ENCODE measurements at regions of chr11 and their contacts with region 1.

Region 1: GRCh38 chr11:33329705-33330329 is 72.6 kb downstream of the HIPK3 start:
- DNase-seq: peak in 1 of 3 donors; percentile 62
- ATAC-seq: peak; percentile 87
- H3K4me3 ChIP-seq: no peak overlapping the region
- H3K4me1 ChIP-seq: peaks cover 1% of the 10 kb centered on the region
- CTCF ChIP-seq: peak; percentile 15

Region 2: GRCh38 chr11:33168709-33169200 is 161.1 kb before region 1 on chr11:
- intact Hi-C with region 1: loop called (anchors 5 kb)
- DNase-seq: no peak
- ATAC-seq: no peak
- H3K4me3 ChIP-seq: no peak overlapping the region
- H3K4me1 ChIP-seq: no peaks in the 10 kb centered on the region
- CTCF ChIP-seq: no peak

Region 3: DNA sequence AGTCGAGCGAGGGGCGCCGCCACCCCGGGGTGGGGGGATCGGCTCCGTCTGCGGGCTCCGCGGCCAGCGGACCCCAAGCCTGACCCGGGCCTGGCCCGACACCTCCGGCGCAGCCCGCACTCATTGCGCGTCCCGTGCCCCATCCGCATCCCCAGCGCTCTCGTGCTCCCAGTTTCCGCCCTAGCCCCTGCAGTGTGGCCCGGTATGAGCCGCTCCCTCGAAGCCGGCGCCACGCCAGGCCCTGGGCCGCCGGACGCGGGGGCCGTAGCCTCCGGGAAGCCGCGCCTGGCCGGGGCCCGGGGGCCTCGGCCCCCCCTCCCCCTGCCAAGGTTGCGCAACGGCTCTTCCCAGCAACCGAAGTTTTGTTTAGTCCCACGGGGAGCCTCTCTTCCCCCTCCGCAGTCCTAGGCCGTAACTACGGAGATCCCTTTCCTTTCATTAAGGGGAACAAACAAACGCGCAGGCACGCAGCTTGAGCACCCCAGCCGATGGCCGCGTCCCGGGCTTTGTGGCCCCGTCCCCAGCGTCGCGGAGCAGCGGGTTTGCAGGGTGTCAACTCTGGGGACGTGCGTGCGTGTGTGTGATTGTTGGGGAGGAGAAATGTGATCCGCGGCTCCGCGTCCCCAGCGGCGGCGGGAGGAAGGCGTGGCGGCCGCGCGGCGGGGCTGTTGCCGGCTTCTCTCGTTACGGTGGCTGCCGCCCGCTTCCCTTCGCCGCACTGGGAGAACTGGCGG is 71.8 kb before region 1 on chr11:
- intact Hi-C with region 1: loop called (anchors 10 kb)
- DNase-seq: peak; percentile 79 to 87 (median 87)
- ATAC-seq: peak; percentile 75
- H3K4me3 ChIP-seq: peak overlapping the region; percentile 95
- H3K4me1 ChIP-seq: peaks cover 16% of the 10 kb centered on the region
- CTCF ChIP-seq: no peak

Region 4: DNA sequence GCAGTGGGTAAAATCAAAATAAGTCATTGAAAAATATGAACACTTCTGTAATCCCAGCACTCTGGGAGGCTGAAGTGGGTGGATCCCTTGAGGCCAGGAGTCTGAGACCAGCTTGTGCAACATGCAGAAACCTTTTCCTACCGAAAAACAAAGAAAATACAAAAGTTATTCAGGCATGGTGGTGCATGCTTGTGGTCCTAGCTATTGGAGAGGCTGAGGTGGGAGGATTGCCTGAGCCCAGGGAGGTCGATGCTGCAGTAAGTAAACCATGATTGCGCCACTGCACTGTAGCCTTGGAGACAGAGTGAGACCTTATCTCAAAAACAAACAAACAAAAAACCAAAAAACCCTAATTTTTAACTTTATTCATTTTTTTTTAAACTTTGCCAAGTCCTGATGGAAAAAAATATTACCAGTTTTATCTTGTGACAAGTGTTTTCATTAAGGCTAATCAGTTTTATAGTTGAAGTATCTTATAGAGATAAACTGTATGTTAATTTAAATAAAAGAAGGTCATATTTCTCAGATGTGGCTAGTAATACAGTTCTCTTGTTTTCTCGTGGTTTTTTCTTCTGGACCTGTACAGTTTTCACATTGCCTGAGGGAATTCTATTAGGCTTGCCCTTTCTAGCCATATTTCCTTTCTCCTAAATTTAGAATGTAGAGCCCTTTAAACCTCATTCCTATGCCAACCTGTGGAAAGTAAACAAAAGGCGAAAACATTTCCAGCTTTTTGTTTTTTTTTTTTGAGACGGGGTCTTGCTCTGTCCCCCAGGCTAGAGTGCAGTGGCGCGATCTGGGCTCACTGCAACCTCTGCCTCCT is 63.2 kb before region 1 on chr11:
- intact Hi-C with region 1: loop called in 1 of 2 experiments (anchors 10 kb)
- DNase-seq: no peak
- ATAC-seq: no peak
- H3K4me3 ChIP-seq: no peak overlapping the region
- H3K4me1 ChIP-seq: peaks cover 17% of the 10 kb centered on the region
- CTCF ChIP-seq: no peak